GM12878 (cell line): ENCODE measurements at regions of chr17 and their contacts with region 1.

Region 1: DNA sequence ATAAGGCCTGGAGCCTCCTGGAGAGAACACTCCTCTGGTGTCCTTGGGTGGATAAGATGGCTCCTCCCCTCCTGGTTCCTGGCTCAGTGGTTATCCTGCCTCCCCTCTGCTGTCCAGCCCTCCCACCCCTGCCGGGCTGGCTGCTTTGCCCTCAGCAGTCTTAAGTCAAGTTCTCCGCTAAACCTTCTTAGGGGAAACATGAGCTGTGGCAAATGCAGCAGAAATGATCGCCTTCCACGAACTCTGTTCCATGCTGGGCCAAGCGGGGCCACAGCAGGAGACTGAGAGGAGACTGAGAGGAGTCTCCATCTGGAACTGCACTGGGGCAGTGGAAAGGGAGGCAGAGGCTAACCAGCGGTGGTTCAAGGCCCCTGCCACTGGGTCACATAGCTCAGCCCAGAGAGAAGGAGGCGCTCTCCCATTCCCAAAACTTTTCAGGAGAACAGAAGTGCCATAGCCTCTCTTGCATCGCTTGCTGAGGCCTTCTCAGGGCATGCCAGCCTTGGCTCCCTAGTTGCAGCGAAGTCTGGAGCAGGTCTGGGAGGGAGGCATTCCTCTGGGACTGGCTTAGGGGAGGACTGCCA is 26.9 kb downstream of the TNS4 start:
- DNase-seq: no peak
- ATAC-seq: no peak
- H3K4me3 ChIP-seq: no peak overlapping the region
- H3K27ac ChIP-seq: no peak overlapping the region
- H3K4me1 ChIP-seq: no peaks in the 10 kb centered on the region
- H3K27me3 ChIP-seq: no peaks in the 10 kb centered on the region
- CTCF ChIP-seq: no peak
- EP300 ChIP-seq: no peak
- POLR2A ChIP-seq: no peak
- RAD21 ChIP-seq: no peak

Region 2: GRCh38 chr17:40283662-40284061 is 190.8 kb before region 1 on chr17:
- CTCF ChIA-PET with region 1: no interaction called
- POLR2A ChIA-PET with region 1: no interaction called
- RAD21 ChIA-PET with region 1: no interaction called
- SMC1A ChIA-PET with region 1: no interaction called
- in situ Hi-C with region 1: no loop called
- intact Hi-C with region 1: no loop called
- DNase-seq: no peak
- ATAC-seq: peak; percentile 29
- H3K4me3 ChIP-seq: no peak overlapping the region
- H3K27ac ChIP-seq: no peak overlapping the region
- H3K4me1 ChIP-seq: no peaks in the 10 kb centered on the region
- H3K27me3 ChIP-seq: no peaks in the 10 kb centered on the region
- CTCF ChIP-seq: no peak
- EP300 ChIP-seq: no peak
- POLR2A ChIP-seq: no peak
- RAD21 ChIP-seq: no peak

Region 3: DNA sequence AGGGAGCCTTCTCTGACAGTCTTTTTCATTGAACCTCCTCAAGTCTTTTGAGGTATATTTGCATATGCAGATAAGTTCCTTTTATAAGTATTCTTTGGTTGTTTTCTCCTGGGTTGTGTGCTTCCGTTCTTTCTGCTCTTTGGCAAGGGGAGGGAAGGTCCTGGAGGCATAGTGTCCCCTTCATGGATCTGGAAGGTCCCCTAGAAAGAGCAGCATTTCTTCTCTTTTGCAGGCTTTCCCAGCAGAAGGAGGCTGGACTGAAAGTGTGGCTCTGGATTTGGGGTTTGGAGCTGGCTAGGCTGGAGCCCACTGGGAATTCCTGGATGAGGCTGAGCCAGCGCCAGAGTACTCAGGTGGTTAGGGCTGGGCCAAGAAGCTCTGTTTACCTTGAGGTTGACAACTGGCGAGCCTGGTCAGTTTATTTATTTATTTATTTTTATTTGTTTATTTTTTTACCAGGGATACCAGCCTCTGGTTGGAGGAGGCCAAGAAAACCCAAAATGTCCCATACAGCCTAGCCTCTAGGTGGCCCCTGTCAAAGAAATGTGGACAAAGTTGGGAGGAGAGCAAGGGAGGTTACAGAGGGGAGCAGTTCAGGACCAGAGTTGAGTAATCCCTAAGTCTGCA is 51.4 kb before region 1 on chr17:
- CTCF ChIA-PET with region 1: interaction called, 31 read pairs
- POLR2A ChIA-PET with region 1: interaction called, 3 read pairs
- RAD21 ChIA-PET with region 1: interaction called, 7 read pairs
- SMC1A ChIA-PET with region 1: interaction called, 4 read pairs
- in situ Hi-C with region 1: no loop called
- intact Hi-C with region 1: no loop called
- DNase-seq: no peak
- ATAC-seq: no peak
- H3K4me3 ChIP-seq: no peak overlapping the region
- H3K27ac ChIP-seq: no peak overlapping the region
- H3K4me1 ChIP-seq: peaks cover 2% of the 10 kb centered on the region; the same call in 1 of the 2 replicates
- H3K27me3 ChIP-seq: no peaks in the 10 kb centered on the region; a peak in 1 of 4 replicates
- CTCF ChIP-seq: no peak; a peak in 1 of 6 replicates
- EP300 ChIP-seq: no peak
- POLR2A ChIP-seq: no peak
- RAD21 ChIP-seq: no peak

Region 4: GRCh38 chr17:40450175-40450574 is 24.3 kb before region 1 on chr17:
- CTCF ChIA-PET with region 1: interaction called, 61 read pairs
- POLR2A ChIA-PET with region 1: interaction called, 5 read pairs
- RAD21 ChIA-PET with region 1: interaction called, 11 read pairs
- SMC1A ChIA-PET with region 1: interaction called, 14 read pairs
- in situ Hi-C with region 1: no loop called
- intact Hi-C with region 1: no loop called
- DNase-seq: no peak
- ATAC-seq: peak; percentile 69
- H3K4me3 ChIP-seq: no peak overlapping the region
- H3K27ac ChIP-seq: no peak overlapping the region
- H3K4me1 ChIP-seq: peaks cover 6% of the 10 kb centered on the region
- H3K27me3 ChIP-seq: 0 out of 4 replicates have a peak, but pooled peaks cover 0 to 7% of the 10 kb centered on the region in 2 experiments
- CTCF ChIP-seq: peak; percentile 55 to 78 (median 56); a peak in 5 of 6 replicates
- EP300 ChIP-seq: no peak
- POLR2A ChIP-seq: no peak
- RAD21 ChIP-seq: peak; percentile 21; the same call in 1 of the 2 replicates

Region 5: DNA sequence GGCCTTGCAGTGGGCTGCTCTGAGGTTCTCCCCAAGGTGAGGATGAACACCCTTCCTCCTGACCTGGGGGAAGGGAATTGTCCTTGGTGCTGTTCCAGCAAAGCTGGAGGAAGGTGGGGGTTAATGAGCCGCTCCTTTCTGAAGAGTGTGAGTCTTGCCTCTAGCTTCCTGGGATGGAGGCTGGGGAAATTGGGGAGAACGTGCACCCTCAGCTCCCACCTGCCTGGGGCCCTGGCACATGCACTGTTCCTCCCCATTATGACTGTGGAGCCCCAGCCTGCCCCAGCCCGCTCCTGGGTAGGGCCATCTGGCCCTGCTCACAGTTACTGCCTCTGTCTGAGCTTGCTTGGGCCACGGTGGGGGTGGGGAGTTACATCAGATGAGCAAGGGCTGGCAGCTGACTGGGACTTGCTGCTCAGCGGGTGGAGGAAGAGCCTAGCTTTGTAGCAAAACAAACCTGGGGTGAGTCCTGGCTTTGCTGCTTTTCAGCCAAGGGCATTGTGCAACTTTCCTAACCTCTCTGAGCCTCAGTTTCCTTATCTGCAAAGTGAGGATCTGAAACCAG is 15.9 kb after region 1 on chr17:
- CTCF ChIA-PET with region 1: interaction called, 12 read pairs
- POLR2A ChIA-PET with region 1: interaction called, 3 read pairs
- RAD21 ChIA-PET with region 1: interaction called, 3 read pairs
- SMC1A ChIA-PET with region 1: interaction called, 7 read pairs
- in situ Hi-C with region 1: no loop called
- intact Hi-C with region 1: no loop called
- DNase-seq: no peak
- ATAC-seq: peak; percentile 57
- H3K4me3 ChIP-seq: no peak overlapping the region
- H3K27ac ChIP-seq: no peak overlapping the region
- H3K4me1 ChIP-seq: peaks cover 7% of the 10 kb centered on the region
- H3K27me3 ChIP-seq: peaks cover 0 to 2% of the 10 kb centered on the region in 2 experiments; a peak in 2 of 4 replicates
- CTCF ChIP-seq: no peak
- EP300 ChIP-seq: no peak
- POLR2A ChIP-seq: no peak
- RAD21 ChIP-seq: no peak

Region 6: DNA sequence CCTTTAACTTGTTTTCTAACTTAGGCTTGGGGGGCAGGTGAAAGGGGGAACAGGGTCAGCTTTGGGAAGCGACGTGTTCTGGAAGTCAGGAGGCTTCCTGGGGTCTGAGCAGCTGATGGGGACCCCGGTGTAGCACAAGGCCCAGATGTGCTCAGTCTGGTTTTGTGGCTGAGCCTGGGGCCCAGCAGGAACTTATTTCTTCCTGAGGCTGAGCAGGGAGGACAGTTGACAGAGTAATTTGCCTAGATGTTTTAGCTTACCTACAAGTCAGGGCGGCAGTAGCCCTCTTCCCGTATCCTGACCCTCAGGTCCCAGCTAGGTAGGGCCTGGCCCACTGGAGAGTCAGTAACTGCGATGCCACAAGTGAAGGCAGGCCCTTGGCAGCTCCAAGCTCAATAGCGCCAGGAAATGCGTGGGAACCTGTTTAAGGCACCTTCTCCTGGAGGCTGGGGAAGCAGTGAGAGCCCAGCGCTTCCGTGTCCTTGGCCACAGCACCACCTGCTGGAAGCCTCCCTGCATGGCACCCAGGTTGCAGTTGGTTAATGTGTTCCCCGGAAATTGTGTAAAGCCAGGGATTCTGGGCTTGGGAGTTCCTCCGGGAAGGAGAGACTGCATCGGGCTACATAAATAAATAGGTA is 85.6 kb after region 1 on chr17:
- CTCF ChIA-PET with region 1: interaction called, 27 read pairs
- POLR2A ChIA-PET with region 1: no interaction called
- RAD21 ChIA-PET with region 1: interaction called, 9 read pairs
- SMC1A ChIA-PET with region 1: interaction called, 8 read pairs
- in situ Hi-C with region 1: no loop called
- intact Hi-C with region 1: no loop called
- DNase-seq: peak; percentile 72
- ATAC-seq: peak; percentile 5
- H3K4me3 ChIP-seq: peak overlapping the region; percentile 70
- H3K27ac ChIP-seq: peak overlapping the region; percentile 98
- H3K4me1 ChIP-seq: peaks cover 33% of the 10 kb centered on the region
- H3K27me3 ChIP-seq: no peaks in the 10 kb centered on the region
- CTCF ChIP-seq: peak; percentile 91 to 97 (median 94)
- EP300 ChIP-seq: no peak
- POLR2A ChIP-seq: no peak; the same call in 1 of the 2 replicates
- RAD21 ChIP-seq: peak; percentile 90

Region 7: DNA sequence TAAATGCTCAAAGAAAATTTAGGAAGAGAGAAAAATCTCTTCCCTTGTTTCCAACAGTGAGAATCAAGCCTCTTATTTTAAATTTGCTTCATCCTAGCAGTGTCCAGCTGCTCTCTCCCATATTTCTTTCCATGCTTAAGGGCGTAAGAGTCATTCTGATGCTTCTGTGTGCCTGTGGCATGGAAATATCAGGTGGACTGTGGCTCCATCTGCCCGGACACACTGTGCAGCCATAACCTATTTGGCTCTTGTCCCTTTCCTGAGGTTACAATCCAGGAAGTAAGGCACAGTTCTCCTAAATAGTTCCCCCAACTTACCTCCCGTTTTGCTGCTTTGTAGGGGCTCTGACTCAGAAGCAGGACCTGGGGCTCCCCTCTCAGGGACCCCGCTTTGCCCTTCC is 196.8 kb after region 1 on chr17:
- CTCF ChIA-PET with region 1: no interaction called
- POLR2A ChIA-PET with region 1: no interaction called
- RAD21 ChIA-PET with region 1: no interaction called
- SMC1A ChIA-PET with region 1: no interaction called
- in situ Hi-C with region 1: no loop called
- intact Hi-C with region 1: no loop called
- DNase-seq: no peak
- ATAC-seq: no peak
- H3K4me3 ChIP-seq: no peak overlapping the region
- H3K27ac ChIP-seq: no peak overlapping the region
- H3K4me1 ChIP-seq: no peaks in the 10 kb centered on the region
- H3K27me3 ChIP-seq: peaks cover 0 to 10% of the 10 kb centered on the region in 2 experiments; a peak in 2 of 4 replicates
- CTCF ChIP-seq: no peak
- EP300 ChIP-seq: no peak
- POLR2A ChIP-seq: no peak
- RAD21 ChIP-seq: no peak